WTC11 (cell line): ENCODE measurements at regions of chr9 and their contacts with region 1.

Region 1: GRCh38 chr9:135500525-135501358 is at the start of gene MRPS2:
- DNase-seq: peak; percentile 93
- ATAC-seq: peak; percentile 86
- H3K4me3 Mint-ChIP-seq: peak within 1 kb of the TSS; percentile 80
- H3K27ac Mint-ChIP-seq: no peak within 1 kb of the TSS
- H3K4me1 Mint-ChIP-seq: peaks cover 13% of the 10 kb centered on the region
- H3K27me3 Mint-ChIP-seq: no peaks in the 10 kb centered on the region
- CTCF ChIP-seq: peak; percentile 32; the same call in 1 of the 2 replicates
- total RNA-seq, gene MRPS2: 74.2 to 78.0 TPM (median 77.6 TPM) in 3 replicates

Region 2: DNA sequence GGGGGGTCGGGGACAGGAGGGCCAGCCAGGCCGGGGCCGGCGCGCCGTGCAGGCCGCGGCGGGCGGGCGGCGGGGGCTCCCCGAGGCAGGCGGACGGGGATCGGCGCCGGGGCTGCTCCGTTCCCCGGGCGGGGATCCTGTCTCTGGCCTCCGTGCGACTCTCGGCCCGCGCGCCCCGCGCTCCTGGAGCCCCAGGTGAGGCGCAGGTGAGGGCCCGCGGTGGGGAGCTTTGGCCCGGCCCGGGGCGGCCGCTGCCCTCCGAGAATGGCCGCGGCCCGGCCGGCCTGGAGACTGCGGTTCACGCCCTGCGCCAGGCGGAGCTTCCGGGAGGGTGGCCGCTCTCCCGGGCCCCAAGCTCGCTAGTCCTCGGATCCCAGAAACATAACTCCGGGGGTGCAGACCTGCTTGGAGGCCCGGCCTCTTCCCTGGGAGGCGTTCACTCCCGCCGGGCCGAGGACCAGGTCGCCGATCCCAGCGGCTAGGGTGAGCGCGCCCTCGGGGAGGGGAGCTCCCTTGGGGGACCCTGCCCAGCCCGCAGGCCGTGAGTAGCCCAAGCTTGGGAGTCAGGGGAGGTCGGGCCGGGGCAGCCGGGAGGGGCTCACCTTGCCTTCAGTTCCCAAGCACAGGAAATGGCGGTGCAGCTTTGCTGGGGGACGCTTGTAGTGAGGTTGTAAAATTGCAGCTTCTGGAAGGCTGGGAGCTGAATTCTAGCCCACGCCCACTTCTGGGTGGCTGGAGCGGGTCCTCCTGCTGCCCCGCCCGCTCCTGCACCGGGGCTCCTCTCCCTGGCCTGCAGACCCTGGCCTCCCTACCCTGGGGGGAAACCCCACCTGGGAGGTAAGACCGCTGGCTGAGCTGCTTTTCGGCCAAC is 20.4 kb before region 1 on chr9:
- CTCF ChIA-PET with region 1: interaction called, 12 read pairs
- POLR2A ChIA-PET with region 1: no interaction called
- DNase-seq: peak; percentile 45
- ATAC-seq: peak; percentile 61
- H3K4me3 Mint-ChIP-seq: peak overlapping the region; percentile 66
- H3K27ac Mint-ChIP-seq: no peak overlapping the region
- H3K4me1 Mint-ChIP-seq: peaks cover 21% of the 10 kb centered on the region
- H3K27me3 Mint-ChIP-seq: no peaks in the 10 kb centered on the region; the same call in 1 of the 2 replicates
- CTCF ChIP-seq: no peak

Region 3: GRCh38 chr9:135524130-135524861 is 23.6 kb after region 1 on chr9:
- CTCF ChIA-PET with region 1: interaction called, 42 read pairs
- POLR2A ChIA-PET with region 1: no interaction called
- DNase-seq: no peak
- ATAC-seq: no peak
- H3K4me3 Mint-ChIP-seq: no peak overlapping the region
- H3K27ac Mint-ChIP-seq: no peak overlapping the region
- H3K4me1 Mint-ChIP-seq: peaks cover 9% of the 10 kb centered on the region
- H3K27me3 Mint-ChIP-seq: no peaks in the 10 kb centered on the region
- CTCF ChIP-seq: no peak